ENCODE measurements at regions of chr1 and their contacts with region 1.

Region 1: DNA sequence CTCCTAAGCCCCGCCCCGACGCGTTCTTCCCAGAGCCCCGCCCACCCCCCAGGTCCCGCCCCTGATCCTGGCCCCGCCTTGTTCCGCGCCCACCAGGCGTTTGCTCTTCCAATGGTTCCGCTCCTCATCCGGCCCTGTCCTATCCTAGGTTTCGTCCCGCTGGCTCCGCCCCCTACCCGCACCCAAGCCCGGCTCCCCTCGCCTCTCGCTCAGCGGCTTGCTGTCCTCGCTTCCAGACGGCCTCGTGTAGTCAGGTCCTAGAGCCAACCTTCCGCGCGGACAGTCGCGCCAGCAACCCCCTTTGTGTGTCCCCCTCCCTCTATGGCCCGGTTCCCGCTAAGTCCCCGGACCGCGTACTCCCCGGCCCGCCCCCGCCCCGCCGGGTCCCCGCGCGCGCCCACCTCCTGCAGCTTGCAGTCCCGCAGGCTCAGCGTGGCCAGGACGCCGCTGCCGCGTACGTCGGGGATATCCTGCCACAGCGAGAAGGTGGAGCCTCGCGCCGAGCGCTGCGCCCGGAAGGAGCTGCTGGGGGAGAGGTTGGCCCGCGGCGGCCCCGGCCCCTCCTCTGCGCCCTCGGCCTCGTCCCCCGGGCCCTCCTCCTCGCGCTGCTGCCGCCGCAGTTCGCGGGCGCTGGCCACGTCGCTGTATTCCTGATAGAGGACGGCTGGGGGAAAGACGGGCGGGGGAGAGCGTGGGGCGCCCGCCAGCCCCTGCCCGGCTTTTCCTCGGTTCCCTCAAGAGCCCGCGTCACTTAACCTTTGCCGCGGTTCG is 5.7 kb downstream of the ARHGEF19 start:
- DNase-seq: peak; percentile 88 to 97
- H3K4me3 ChIP-seq: peak overlapping the region; percentile 75 to 76
- H3K27ac ChIP-seq: peak overlapping the region; percentile 89 to 91
- H3K4me1 ChIP-seq: peaks cover 12 to 16% of the 10 kb centered on the region in 2 donors
- H3K27me3 ChIP-seq: no peaks in the 10 kb centered on the region
- CTCF ChIP-seq: no peak

Region 2: GRCh38 chr1:15902882-15903281 is 303.9 kb before region 1 on chr1:
- intact Hi-C with region 1: no loop called
- DNase-seq: no peak
- H3K4me3 ChIP-seq: no peak overlapping the region
- H3K27ac ChIP-seq: peak overlapping the region in 1 of 2 donors; percentile 78
- H3K4me1 ChIP-seq: peaks cover 7 to 25% of the 10 kb centered on the region in 2 donors
- H3K27me3 ChIP-seq: no peaks in the 10 kb centered on the region
- CTCF ChIP-seq: no peak

Region 3: GRCh38 chr1:16236511-16237342 is 30.0 kb after region 1 on chr1 and contains the start of gene CPLANE2:
- intact Hi-C with region 1: loop called (anchors 1 kb)
- DNase-seq: peak; percentile 68 to 97
- H3K4me3 ChIP-seq: peak within 1 kb of the TSS; percentile 67 to 72
- H3K27ac ChIP-seq: peak within 1 kb of the TSS; percentile 74 to 84
- H3K4me1 ChIP-seq: peaks cover 0 to 19% of the 10 kb centered on the region in 2 donors
- H3K27me3 ChIP-seq: no peaks in the 10 kb centered on the region
- CTCF ChIP-seq: no peak
- total RNA-seq, gene CPLANE2: not detected

Region 4: DNA sequence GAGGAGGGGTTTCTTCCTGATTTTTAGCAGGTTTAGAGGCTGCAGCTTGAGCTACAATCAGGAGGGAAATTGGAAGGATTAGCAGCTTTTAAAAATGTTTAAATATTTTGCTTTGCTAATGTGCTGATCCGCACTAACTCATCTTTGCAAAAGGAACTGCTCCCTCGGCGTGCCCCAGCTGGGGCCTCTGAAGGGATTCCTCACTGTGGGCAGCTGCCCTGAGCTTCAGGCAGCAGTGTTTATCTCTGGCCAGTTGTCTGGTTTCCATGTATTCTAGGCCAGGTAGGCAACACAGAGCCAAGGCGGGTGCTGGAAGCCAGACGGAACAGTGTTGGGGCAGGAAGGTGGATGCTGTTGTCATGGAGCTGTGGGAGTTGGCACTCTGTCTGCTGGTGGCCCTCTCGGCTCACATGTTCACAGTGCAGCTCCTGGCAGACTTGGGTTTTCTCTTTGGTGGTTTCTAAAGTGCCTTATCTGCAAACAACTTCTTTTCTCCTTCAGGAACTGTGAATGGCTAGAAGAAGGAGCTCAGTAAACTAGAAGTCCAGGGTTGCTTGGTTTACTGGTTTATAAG is 252.7 kb after region 1 on chr1:
- intact Hi-C with region 1: no loop called
- DNase-seq: no peak
- H3K4me3 ChIP-seq: no peak overlapping the region
- H3K27ac ChIP-seq: no peak overlapping the region
- H3K4me1 ChIP-seq: peaks cover 0 to 11% of the 10 kb centered on the region in 2 donors
- H3K27me3 ChIP-seq: no peaks in the 10 kb centered on the region
- CTCF ChIP-seq: no peak

Measured in ascending aorta (tissue), 2 donors.